Naive thymus-derived CD4-positive, alpha-beta T cell (primary cell): ENCODE measurements at regions of chr19 and their contacts with region 1.

Region 1: GRCh38 chr19:19366612-19367396 is 38.7 kb upstream of the GATAD2A start:
- DNase-seq: peak; percentile 49 to 76 (median 70)
- ATAC-seq: peak; percentile 83
- H3K4me3 ChIP-seq: no peak overlapping the region
- H3K4me3 Mint-ChIP-seq: peak overlapping the region; percentile 21 to 66 (median 54)
- H3K27ac ChIP-seq: peak overlapping the region; percentile 22
- H3K27ac Mint-ChIP-seq: peak overlapping the region; percentile 37 to 91 (median 81)
- H3K4me1 ChIP-seq: peaks cover 14 to 15% of the 10 kb centered on the region in 2 donors
- H3K4me1 Mint-ChIP-seq: peaks cover 11 to 26% (median 19%) of the 10 kb centered on the region in 7 donors
- H3K27me3 ChIP-seq: no peaks in the 10 kb centered on the region
- H3K27me3 Mint-ChIP-seq: no peaks in the 10 kb centered on the region

Region 2: DNA sequence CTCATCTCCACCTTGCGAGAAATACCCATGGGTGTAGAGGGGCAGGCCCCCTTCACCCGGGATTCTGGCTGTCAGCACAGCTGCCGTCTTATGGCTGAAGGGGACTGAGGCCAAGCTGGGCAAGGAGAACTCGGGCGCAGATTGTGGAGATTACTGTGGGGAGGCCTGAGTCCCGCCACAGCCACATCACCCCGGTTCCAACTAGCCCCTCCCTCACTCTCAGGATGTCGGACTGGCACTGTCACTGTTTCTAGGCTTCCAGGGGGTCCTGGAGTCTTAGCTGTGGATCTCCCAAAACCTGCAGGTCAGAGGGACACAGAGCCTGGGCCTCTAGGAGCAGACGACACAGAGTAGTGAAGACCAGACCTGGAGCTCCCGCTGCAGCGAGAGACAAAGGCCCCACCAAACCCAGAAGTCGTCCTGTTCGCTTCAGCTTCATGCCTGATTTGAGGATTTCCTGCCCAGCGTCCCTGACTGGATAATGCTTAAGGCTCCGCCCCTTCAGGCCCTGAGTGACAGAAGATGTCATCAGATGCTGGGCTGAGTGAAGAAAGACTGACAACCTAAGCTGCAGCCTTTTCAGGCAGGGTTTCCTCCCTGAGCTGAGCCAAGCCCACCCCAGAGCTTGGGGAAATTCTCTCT is 589.8 kb after region 1 on chr19:
- CTCF ChIA-PET with region 1: no interaction called
- POLR2A ChIA-PET with region 1: no interaction called
- intact Hi-C with region 1: loop called in 1 of 2 experiments (anchors 2 kb)
- DNase-seq: no peak
- ATAC-seq: no peak
- H3K4me3 ChIP-seq: no peak overlapping the region
- H3K4me3 Mint-ChIP-seq: no peak overlapping the region
- H3K27ac ChIP-seq: no peak overlapping the region
- H3K27ac Mint-ChIP-seq: no peak overlapping the region
- H3K4me1 ChIP-seq: no peaks in the 10 kb centered on the region
- H3K4me1 Mint-ChIP-seq: peaks cover 0 to 8% (median 5%) of the 10 kb centered on the region in 7 donors
- H3K27me3 ChIP-seq: no peaks in the 10 kb centered on the region
- H3K27me3 Mint-ChIP-seq: no peaks in the 10 kb centered on the region